Posterior vena cava (tissue), 2 donors: ENCODE measurements at regions of chr2 and their contacts with region 1.

Region 1: DNA sequence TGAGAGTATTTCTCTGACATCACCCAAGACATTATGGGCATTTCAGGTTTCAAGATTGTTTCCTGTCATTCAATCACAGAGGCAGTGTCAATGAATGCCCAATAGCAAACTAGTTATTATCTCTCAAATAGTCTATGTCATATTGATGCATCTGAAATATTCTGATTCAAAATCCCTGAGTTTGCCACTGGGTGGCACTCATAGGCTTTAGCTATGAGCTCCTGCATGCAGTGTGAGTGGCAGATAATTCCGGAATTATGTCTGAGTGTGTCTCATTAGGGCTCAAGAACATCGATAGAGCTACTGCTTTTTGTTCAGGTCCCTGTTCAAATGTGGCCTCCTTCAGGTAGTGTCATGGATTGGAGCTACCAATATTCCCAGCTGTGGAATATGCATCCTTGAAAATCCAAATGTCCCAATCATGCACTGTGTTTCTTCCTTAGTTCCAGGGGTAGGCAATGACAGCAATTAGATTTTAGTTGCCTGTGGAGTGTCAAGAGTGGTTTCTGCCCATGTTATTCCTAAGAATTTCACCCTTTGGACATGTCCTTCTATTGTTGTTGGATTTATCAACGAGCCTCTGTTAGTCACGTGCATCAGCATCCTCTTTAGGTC is 7.8 kb upstream of the OR6B3 start:
- DNase-seq: no peak

Region 2: DNA sequence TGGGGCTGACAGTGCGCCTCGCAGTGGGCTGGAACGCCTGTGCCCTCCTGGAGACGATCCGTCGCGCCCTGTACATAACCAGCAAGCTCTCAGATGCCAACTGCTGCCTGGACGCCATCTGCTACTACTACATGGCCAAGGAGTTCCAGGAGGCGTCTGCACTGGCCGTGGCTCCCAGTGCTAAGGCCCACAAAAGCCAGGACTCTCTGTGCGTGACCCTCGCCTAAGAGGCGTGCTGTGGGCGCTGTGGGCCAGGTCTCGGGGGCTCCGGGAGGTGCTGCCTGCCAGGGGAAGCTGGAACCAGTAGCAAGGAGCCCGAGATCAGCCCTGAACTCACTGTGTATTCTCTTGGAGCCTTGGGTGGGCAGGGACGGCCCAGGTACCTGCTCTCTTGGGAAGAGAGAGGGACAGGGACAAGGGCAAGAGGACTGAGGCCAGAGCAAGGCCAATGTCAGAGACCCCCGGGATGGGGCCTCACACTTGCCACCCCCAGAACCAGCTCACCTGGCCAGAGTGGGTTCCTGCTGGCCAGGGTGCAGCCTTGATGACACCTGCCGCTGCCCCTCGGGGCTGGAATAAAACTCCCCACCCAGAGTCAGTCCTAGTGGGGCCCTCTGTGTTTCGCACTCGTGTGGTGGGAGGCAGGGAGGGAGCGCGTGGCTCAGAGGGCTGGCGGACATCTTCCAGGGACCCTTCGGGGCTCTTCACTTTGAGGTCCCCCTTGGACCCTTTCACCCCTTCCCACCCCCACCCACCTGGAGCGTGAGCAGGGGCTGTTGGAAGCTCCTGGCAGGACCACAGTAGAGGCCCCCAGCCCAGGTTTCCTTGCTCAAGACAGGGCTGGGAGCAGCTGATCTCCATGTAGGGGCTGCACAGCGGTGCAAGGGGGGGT is 569.8 kb after region 1 on chr2:
- intact Hi-C with region 1: loop called in 1 of 2 experiments (anchors 2 kb)
- DNase-seq: peak; percentile 72